Natural killer cell (primary cell): ENCODE measurements at regions of chr12 and their contacts with region 1.

Region 1: GRCh38 chr12:55188974-55189556 is 31.8 kb upstream of the OR10A7 start:
- DNase-seq: peak in 1 of 2 donors; percentile 83
- ATAC-seq: peak; percentile 59 to 85 (median 68)
- H3K4me3 ChIP-seq: no peak overlapping the region
- H3K4me3 Mint-ChIP-seq: no peak overlapping the region
- H3K27ac ChIP-seq: no peak overlapping the region
- H3K27ac Mint-ChIP-seq: no peak overlapping the region
- H3K4me1 ChIP-seq: no peaks in the 10 kb centered on the region
- H3K4me1 Mint-ChIP-seq: no peaks in the 10 kb centered on the region
- H3K27me3 ChIP-seq: peaks cover 3% of the 10 kb centered on the region
- H3K27me3 Mint-ChIP-seq: peaks cover 14 to 37% of the 10 kb centered on the region in 2 donors
- CTCF ChIP-seq: peak; percentile 88

Region 2: GRCh38 chr12:54891717-54892554 is 297.1 kb before region 1 on chr12:
- intact Hi-C with region 1: no loop called
- DNase-seq: no peak
- ATAC-seq: no peak
- H3K4me3 ChIP-seq: no peak overlapping the region
- H3K4me3 Mint-ChIP-seq: no peak overlapping the region
- H3K27ac ChIP-seq: no peak overlapping the region
- H3K27ac Mint-ChIP-seq: no peak overlapping the region
- H3K4me1 ChIP-seq: no peaks in the 10 kb centered on the region
- H3K4me1 Mint-ChIP-seq: no peaks in the 10 kb centered on the region
- H3K27me3 ChIP-seq: no peaks in the 10 kb centered on the region
- H3K27me3 Mint-ChIP-seq: peaks cover 0 to 3% of the 10 kb centered on the region in 2 donors
- CTCF ChIP-seq: no peak

Region 3: GRCh38 chr12:55073043-55074022 is 115.7 kb before region 1 on chr12:
- intact Hi-C with region 1: no loop called
- DNase-seq: peak; percentile 68 to 93
- ATAC-seq: peak; percentile 74 to 84 (median 79)
- H3K4me3 ChIP-seq: no peak overlapping the region
- H3K4me3 Mint-ChIP-seq: no peak overlapping the region
- H3K27ac ChIP-seq: no peak overlapping the region
- H3K27ac Mint-ChIP-seq: no peak overlapping the region
- H3K4me1 ChIP-seq: no peaks in the 10 kb centered on the region
- H3K4me1 Mint-ChIP-seq: no peaks in the 10 kb centered on the region
- H3K27me3 ChIP-seq: peaks cover 9% of the 10 kb centered on the region
- H3K27me3 Mint-ChIP-seq: peaks cover 22 to 34% of the 10 kb centered on the region in 2 donors
- CTCF ChIP-seq: peak; percentile 95

Region 4: DNA sequence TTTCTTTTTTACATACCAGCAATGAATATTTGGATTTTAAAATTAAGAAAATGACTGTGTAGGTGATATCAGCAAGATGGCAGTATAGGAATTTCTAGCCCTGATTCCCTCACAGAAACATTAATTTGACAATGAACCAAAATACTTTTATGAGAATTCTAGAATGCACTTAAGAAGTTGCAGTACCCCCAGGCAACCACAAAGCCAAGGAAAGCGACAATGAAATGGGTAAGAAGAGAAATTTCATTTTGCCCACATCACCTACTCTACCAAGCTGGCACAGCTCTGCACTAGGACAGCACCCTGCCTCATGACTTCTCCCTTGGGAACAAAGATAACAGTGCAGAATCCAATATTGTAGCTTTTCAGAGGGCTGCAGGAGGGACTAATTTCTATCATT is 56.2 kb before region 1 on chr12:
- intact Hi-C with region 1: no loop called
- DNase-seq: no peak
- ATAC-seq: no peak
- H3K4me3 ChIP-seq: no peak overlapping the region
- H3K4me3 Mint-ChIP-seq: no peak overlapping the region
- H3K27ac ChIP-seq: no peak overlapping the region
- H3K27ac Mint-ChIP-seq: no peak overlapping the region
- H3K4me1 ChIP-seq: no peaks in the 10 kb centered on the region
- H3K4me1 Mint-ChIP-seq: no peaks in the 10 kb centered on the region
- H3K27me3 ChIP-seq: peaks cover 25% of the 10 kb centered on the region
- H3K27me3 Mint-ChIP-seq: peaks cover 47 to 60% of the 10 kb centered on the region in 2 donors
- CTCF ChIP-seq: no peak

Region 5: DNA sequence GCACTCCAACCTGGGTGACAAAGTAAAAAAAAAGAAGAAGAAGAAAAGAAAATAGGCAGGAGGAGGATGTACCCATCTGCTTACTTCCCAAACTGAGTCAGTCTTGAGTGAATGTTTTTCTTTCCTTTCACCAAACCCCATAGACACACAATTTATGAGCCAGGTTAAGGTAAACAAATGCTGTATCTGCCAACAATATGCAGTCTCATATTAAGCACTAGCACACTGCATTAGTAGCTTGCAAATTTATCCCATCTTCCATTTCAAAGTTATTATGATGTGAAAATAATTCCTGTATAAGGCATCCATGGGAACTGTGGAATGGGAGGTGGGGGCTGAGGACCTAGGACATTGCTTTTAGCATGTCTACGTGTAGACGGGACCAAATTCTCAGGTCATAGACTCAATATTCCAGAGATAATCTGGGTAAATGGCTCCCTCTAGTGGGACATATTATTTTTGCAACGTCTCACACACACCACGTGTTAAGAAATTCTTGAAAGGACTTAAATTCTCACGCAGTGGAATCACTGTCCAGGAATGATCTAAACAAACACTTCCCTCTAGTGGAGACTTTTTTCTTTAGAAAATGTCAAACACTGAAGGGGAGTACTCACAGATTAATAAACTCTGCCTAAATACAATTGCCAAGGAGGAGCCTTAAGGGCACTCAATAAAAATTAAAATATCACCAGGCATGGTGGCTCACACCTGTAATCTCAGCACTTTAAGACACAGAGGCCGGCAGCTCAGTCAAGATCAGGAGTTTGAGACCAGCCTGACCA is 430.5 kb after region 1 on chr12:
- intact Hi-C with region 1: loop called (anchors 1 kb)
- DNase-seq: peak in 1 of 2 donors; percentile 86
- ATAC-seq: peak; percentile 86 to 97 (median 91)
- H3K4me3 ChIP-seq: no peak overlapping the region
- H3K4me3 Mint-ChIP-seq: no peak overlapping the region
- H3K27ac ChIP-seq: no peak overlapping the region
- H3K27ac Mint-ChIP-seq: no peak overlapping the region
- H3K4me1 ChIP-seq: no peaks in the 10 kb centered on the region
- H3K4me1 Mint-ChIP-seq: peaks cover 0 to 4% of the 10 kb centered on the region in 2 donors
- H3K27me3 ChIP-seq: peaks cover 3% of the 10 kb centered on the region
- H3K27me3 Mint-ChIP-seq: peaks cover 31 to 53% of the 10 kb centered on the region in 2 donors
- CTCF ChIP-seq: peak; percentile 85